ENCODE measurements at regions of chr1 and their contacts with region 1.

Region 1: DNA sequence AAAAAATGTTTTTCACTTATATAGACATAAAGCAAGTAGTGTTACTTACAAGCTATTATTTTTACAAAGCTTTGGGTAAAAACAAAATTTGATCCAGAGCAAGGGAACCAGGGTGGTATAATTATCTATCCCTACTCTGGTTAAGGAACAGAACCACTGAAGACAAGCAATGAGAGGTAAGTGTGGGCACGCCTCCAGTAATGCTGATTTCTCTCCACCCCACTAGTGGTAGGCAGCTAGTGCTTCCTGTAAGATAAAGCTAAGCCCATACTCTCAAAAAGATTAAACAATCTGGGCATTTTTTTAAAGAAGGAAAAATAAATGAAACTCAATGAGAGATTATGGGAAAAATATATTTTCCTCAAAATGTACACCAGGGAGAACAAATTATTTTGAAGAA is 22.1 kb downstream of the TFB2M start:
- DNase-seq: no peak
- H3K4me3 ChIP-seq: no peak overlapping the region
- H3K27ac ChIP-seq: no peak overlapping the region
- H3K4me1 ChIP-seq: no peaks in the 10 kb centered on the region
- H3K27me3 ChIP-seq: no peaks in the 10 kb centered on the region
- CTCF ChIP-seq: no peak

Region 2: DNA sequence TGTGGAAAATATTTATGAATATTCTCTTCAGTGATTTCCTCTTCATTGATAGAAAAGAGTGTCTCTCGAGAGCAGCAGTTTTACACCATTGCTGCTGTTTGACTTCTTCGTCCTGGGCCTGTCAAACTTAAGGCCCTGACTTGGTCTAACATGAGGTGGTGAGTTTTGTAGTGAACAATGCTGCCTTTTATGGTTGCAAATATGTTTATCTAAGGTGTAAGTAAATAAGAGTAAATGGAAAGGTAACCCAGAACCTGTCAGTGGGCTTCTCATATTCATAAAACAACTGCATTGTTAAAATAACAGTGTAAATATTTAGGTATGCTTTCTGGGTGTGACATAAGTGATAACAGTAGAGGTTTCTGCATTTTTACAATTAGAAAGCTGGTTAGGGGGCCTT is 117.5 kb after region 1 on chr1:
- CTCF ChIA-PET with region 1: no interaction called
- dilution Hi-C with region 1: no loop called
- in situ Hi-C with region 1: no loop called
- intact Hi-C with region 1: loop called (anchors 1 kb)
- DNase-seq: no peak
- H3K4me3 ChIP-seq: no peak overlapping the region
- H3K27ac ChIP-seq: no peak overlapping the region
- H3K4me1 ChIP-seq: no peaks in the 10 kb centered on the region
- H3K27me3 ChIP-seq: no peaks in the 10 kb centered on the region
- CTCF ChIP-seq: no peak